ENCODE measurements at regions of chr6 and their contacts with region 1.

Region 1: DNA sequence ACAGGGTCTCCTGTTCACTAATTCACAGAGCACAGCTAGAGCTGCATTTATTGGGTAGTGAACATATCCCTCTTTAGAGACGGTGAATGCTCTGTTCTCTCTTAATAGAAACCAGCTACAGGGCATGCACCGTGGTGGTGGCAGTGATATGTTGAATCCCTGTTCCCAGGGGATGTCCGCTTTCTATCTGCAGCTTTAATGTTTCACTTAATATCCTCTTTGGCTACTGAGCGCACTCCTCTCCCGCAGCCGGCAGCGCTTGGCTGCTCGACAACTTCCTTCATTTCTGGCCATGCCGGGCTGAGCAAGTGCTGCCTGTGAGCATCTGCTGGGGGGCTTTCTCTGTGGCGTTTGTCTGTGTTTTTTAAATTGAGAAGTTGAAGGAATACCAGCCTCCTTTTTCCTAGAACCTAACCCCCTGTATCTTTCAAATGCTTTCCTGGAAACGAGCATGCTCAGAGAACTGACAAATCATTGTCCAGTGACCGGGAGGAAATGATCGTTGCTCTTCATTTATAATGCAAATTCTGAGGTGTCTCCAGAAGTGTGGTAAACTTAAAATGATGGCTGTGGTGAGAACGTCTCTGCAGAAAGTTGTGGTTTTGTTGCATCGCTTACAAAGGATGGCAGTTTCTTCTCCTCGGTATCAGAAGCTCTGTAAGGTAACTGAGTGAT is 297.9 kb downstream of the UTRN start:
- DNase-seq: peak; percentile 23
- CTCF ChIP-seq: no peak

Region 2: GRCh38 chr6:144931172-144932035 is 348.3 kb after region 1 on chr6:
- in situ Hi-C with region 1: loop called (anchors 25 kb)
- DNase-seq: peak; percentile 6
- CTCF ChIP-seq: peak; percentile 45

Region 3: DNA sequence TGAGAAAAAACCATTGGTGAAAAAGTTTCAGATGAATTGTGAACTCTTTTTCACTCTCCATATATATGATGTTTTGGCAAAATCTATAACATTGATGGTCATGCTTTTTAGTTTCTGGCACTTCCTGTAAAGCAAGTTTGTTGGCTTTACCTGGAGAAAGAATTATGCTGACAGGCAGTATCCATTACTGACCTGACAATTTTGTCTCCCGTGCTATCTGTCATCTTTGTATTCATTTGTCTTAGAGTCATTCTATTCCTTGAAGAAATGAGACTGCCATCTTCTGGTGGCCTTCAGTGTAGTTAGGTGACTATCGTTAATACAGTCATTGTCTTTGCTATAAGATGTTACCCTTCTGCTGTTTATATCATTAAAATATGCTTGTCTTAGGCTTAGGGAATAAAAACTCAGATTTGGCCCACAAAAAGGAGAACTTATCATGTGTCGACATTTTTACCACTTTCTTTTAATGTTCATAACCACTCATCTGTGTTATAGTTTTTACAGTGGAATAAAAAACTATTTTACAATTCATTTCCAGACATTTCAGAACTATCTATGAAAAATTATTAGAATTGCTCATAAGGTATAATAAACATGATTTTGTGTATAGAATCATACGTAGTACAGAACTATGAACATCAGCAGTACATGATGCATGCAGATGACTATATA is 445.2 kb after region 1 on chr6:
- in situ Hi-C with region 1: loop called (anchors 25 kb)
- DNase-seq: peak; percentile 45
- CTCF ChIP-seq: peak; percentile 41

Region 4: GRCh38 chr6:145214570-145214969 is 631.5 kb after region 1 on chr6:
- in situ Hi-C with region 1: loop called (anchors 10 kb)
- DNase-seq: no peak
- CTCF ChIP-seq: peak; percentile 16